CD4-positive, alpha-beta T cell (primary cell): ENCODE measurements at regions of chr1 and their contacts with region 1.

Region 1: DNA sequence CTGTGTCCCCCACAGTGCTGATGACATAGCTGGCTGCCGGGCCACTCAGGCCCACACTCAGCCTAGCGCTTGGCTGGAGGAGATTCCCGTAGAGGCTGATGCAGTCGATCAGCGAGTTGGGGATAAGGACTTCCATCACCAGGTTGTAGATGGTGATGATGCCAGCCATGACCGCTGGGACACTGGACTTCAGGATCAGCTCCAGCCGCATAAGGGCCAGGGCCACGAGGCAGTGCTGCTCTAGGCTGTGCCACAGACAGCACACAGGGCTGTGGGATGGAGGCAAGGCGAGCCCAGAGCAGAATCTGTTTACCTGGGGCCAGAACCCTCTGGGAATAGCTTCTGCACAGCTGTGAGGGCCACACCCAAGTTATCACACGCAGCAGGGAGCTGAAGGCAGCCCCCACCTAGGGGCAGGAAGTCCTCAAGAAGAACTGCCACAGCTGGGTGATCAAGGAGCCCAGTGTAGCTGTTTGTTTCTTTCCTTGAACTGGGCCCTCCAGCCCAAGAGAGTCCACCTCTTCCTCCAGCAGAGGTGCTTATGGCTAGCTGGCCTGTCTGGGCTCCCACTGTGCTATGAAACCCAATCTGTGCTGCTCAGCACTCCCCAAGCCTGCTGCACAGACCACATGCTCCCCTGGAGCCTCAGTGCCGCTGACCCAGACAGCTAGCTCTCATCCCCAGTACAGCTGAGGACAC is 6.2 kb downstream of the SLC2A1 start:
- DNase-seq: peak in 10 of 14 experiments; percentile 24 to 73 (median 48)
- ATAC-seq: peak; percentile 79
- H3K4me3 ChIP-seq: peak overlapping the region; percentile 3
- H3K4me3 Mint-ChIP-seq: peak overlapping the region; percentile 54
- H3K27ac ChIP-seq: peak overlapping the region; percentile 33 to 43
- H3K27ac Mint-ChIP-seq: peak overlapping the region; percentile 5
- H3K4me1 ChIP-seq: peaks cover 94% of the 10 kb centered on the region
- H3K4me1 Mint-ChIP-seq: peaks cover 93% of the 10 kb centered on the region
- H3K27me3 ChIP-seq: no peaks in the 10 kb centered on the region
- H3K27me3 Mint-ChIP-seq: no peaks in the 10 kb centered on the region
- CTCF ChIP-seq: no peak

Region 2: GRCh38 chr1:42936309-42937078 is 16.0 kb before region 1 on chr1:
- CTCF ChIA-PET with region 1: interaction called, 4 read pairs
- POLR2A ChIA-PET with region 1: interaction called, 35 read pairs
- intact Hi-C with region 1: loop called in 1 of 2 experiments (anchors 1 kb)
- DNase-seq: peak in 7 of 14 experiments; percentile 22 to 67 (median 55)
- ATAC-seq: peak; percentile 13
- H3K4me3 ChIP-seq: no peak overlapping the region
- H3K4me3 Mint-ChIP-seq: peak overlapping the region; percentile 64
- H3K27ac ChIP-seq: peak overlapping the region; percentile 69 to 75
- H3K27ac Mint-ChIP-seq: peak overlapping the region; percentile 91
- H3K4me1 ChIP-seq: peaks cover 100% of the 10 kb centered on the region
- H3K4me1 Mint-ChIP-seq: peaks cover 93% of the 10 kb centered on the region
- H3K27me3 ChIP-seq: no peaks in the 10 kb centered on the region
- H3K27me3 Mint-ChIP-seq: no peaks in the 10 kb centered on the region
- CTCF ChIP-seq: no peak